CD8-positive, alpha-beta memory T cell (primary cell): ENCODE measurements at regions of chr20 and their contacts with region 1.

Region 1: GRCh38 chr20:33686100-33686983 is at the start of gene E2F1:
- DNase-seq: peak; percentile 91 to 95 (median 93)
- H3K4me3 ChIP-seq: peak within 1 kb of the TSS; percentile 58
- H3K4me3 Mint-ChIP-seq: peak within 1 kb of the TSS; percentile 77 to 92 (median 84)
- H3K27ac ChIP-seq: peak within 1 kb of the TSS; percentile 43
- H3K27ac Mint-ChIP-seq: peak within 1 kb of the TSS; percentile 40 to 98 (median 90)
- H3K4me1 ChIP-seq: peaks cover 37% of the 10 kb centered on the region
- H3K4me1 Mint-ChIP-seq: peaks cover 36 to 48% (median 46%) of the 10 kb centered on the region in 3 donors
- H3K27me3 ChIP-seq: no peaks in the 10 kb centered on the region
- H3K27me3 Mint-ChIP-seq: no peaks in the 10 kb centered on the region
- total RNA-seq, gene E2F1: 68.8 to 72.3 TPM

Region 2: GRCh38 chr20:33515569-33516216 is 170.6 kb before region 1 on chr20:
- CTCF ChIA-PET with region 1: no interaction called
- POLR2A ChIA-PET with region 1: no interaction called
- DNase-seq: no peak
- H3K4me3 ChIP-seq: no peak overlapping the region
- H3K4me3 Mint-ChIP-seq: no peak overlapping the region
- H3K27ac ChIP-seq: no peak overlapping the region
- H3K27ac Mint-ChIP-seq: peak overlapping the region in 1 of 8 donors; percentile 60
- H3K4me1 ChIP-seq: no peaks in the 10 kb centered on the region
- H3K4me1 Mint-ChIP-seq: peaks cover 17 to 47% (median 19%) of the 10 kb centered on the region in 3 donors
- H3K27me3 ChIP-seq: no peaks in the 10 kb centered on the region
- H3K27me3 Mint-ChIP-seq: no peaks in the 10 kb centered on the region

Region 3: GRCh38 chr20:33674295-33675135 is 11.8 kb before region 1 on chr20 and contains the start of gene NECAB3:
- CTCF ChIA-PET with region 1: interaction called, 103 read pairs
- POLR2A ChIA-PET with region 1: interaction called, 6 read pairs
- DNase-seq: peak; percentile 44 to 68 (median 55)
- H3K4me3 ChIP-seq: peak within 1 kb of the TSS; percentile 52
- H3K4me3 Mint-ChIP-seq: peak within 1 kb of the TSS; percentile 76 to 93 (median 89)
- H3K27ac ChIP-seq: peak within 1 kb of the TSS; percentile 78
- H3K27ac Mint-ChIP-seq: peak within 1 kb of the TSS; percentile 48 to 96 (median 86)
- H3K4me1 ChIP-seq: peaks cover 42% of the 10 kb centered on the region
- H3K4me1 Mint-ChIP-seq: peaks cover 29 to 43% (median 43%) of the 10 kb centered on the region in 3 donors
- H3K27me3 ChIP-seq: no peaks in the 10 kb centered on the region
- H3K27me3 Mint-ChIP-seq: no peaks in the 10 kb centered on the region
- total RNA-seq, gene NECAB3: 19.0 to 20.6 TPM

Region 4: GRCh38 chr20:33697129-33697528 is 10.8 kb after region 1 on chr20:
- CTCF ChIA-PET with region 1: no interaction called
- POLR2A ChIA-PET with region 1: no interaction called
- DNase-seq: no peak
- H3K4me3 ChIP-seq: no peak overlapping the region
- H3K4me3 Mint-ChIP-seq: no peak overlapping the region
- H3K27ac ChIP-seq: no peak overlapping the region
- H3K27ac Mint-ChIP-seq: peak overlapping the region in 1 of 8 donors; percentile 52
- H3K4me1 ChIP-seq: no peaks in the 10 kb centered on the region
- H3K4me1 Mint-ChIP-seq: no peaks in the 10 kb centered on the region
- H3K27me3 ChIP-seq: no peaks in the 10 kb centered on the region
- H3K27me3 Mint-ChIP-seq: peaks cover 0 to 1% of the 10 kb centered on the region in 2 donors

Region 5: DNA sequence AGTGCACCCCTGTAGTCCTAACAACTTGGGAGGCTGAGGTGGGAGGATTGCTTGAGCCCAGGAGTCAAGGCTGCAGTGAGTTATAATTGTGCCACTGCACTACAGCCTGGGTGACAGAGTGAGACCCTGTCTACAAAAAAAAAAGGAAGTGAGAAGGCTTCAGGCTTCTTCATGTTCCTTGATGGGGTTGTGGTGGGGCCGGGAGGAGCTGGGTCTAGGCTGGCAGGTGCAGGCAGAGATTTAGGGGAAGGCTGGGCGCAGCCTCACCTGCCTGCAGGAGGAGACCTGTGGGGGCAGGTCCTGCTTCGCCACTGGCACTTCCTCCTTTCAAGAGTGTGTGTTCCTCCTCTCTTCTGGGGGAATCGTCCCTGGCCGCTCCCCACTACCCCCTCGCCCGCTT is 188.7 kb after region 1 on chr20:
- CTCF ChIA-PET with region 1: no interaction called
- POLR2A ChIA-PET with region 1: no interaction called
- DNase-seq: no peak
- H3K4me3 ChIP-seq: no peak overlapping the region
- H3K4me3 Mint-ChIP-seq: no peak overlapping the region
- H3K27ac ChIP-seq: no peak overlapping the region
- H3K27ac Mint-ChIP-seq: peak overlapping the region in 1 of 8 donors; percentile 75
- H3K4me1 ChIP-seq: no peaks in the 10 kb centered on the region
- H3K4me1 Mint-ChIP-seq: no peaks in the 10 kb centered on the region
- H3K27me3 ChIP-seq: no peaks in the 10 kb centered on the region
- H3K27me3 Mint-ChIP-seq: peaks cover 0 to 5% of the 10 kb centered on the region in 2 donors